Activated CD4-positive, alpha-beta memory T cell treated with anti-CD3 and anti-CD28 coated beads for 36 hours (primary cell): ENCODE measurements at regions of chr1 and their contacts with region 1.

Region 1: GRCh38 chr1:109984456-109985275 is at the start of gene AHCYL1:
- DNase-seq: peak; percentile 100
- H3K4me3 Mint-ChIP-seq: peak within 1 kb of the TSS; percentile 99
- H3K27ac Mint-ChIP-seq: peak within 1 kb of the TSS; percentile 92
- H3K4me1 Mint-ChIP-seq: peaks cover 39% of the 10 kb centered on the region
- H3K27me3 Mint-ChIP-seq: no peaks in the 10 kb centered on the region
- total RNA-seq, gene AHCYL1: 89.6 to 92.3 TPM

Region 2: DNA sequence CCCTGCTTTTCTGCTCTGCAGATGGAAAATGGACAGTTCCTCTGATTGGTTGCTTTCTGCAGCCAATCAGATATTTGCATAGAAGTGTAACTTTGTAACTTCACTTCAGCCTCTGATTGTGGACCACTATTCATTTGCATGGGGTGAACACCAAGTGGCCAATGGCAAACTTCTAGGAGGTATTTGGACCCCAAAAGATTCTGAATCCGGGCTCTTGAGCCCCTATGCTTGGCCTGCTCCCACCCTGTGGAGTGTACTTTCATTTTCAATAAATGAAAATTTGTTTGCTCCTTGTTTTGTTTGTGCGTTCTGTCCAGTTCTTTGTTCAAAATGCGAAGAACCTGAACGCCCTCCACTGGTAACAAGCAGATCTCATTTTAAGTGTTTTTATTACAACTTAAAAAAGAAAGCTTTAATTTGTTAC is 335.2 kb before region 1 on chr1:
- CTCF ChIA-PET with region 1: interaction called, 26 read pairs
- POLR2A ChIA-PET with region 1: no interaction called
- intact Hi-C with region 1: no loop called
- DNase-seq: no peak
- H3K4me3 Mint-ChIP-seq: no peak overlapping the region
- H3K27ac Mint-ChIP-seq: no peak overlapping the region
- H3K4me1 Mint-ChIP-seq: no peaks in the 10 kb centered on the region
- H3K27me3 Mint-ChIP-seq: peaks cover 9% of the 10 kb centered on the region

Region 3: GRCh38 chr1:109773146-109773899 is 211.3 kb before region 1 on chr1:
- CTCF ChIA-PET with region 1: interaction called, 723 read pairs
- POLR2A ChIA-PET with region 1: interaction called, 14 read pairs
- intact Hi-C with region 1: loop called (anchors 1 kb)
- DNase-seq: peak; percentile 83
- H3K4me3 Mint-ChIP-seq: no peak overlapping the region
- H3K27ac Mint-ChIP-seq: no peak overlapping the region
- H3K4me1 Mint-ChIP-seq: peaks cover 4% of the 10 kb centered on the region
- H3K27me3 Mint-ChIP-seq: no peaks in the 10 kb centered on the region

Region 4: GRCh38 chr1:109814993-109815786 is 169.5 kb before region 1 on chr1:
- CTCF ChIA-PET with region 1: interaction called, 10 read pairs
- POLR2A ChIA-PET with region 1: no interaction called
- intact Hi-C with region 1: no loop called
- DNase-seq: no peak
- H3K4me3 Mint-ChIP-seq: no peak overlapping the region
- H3K27ac Mint-ChIP-seq: no peak overlapping the region
- H3K4me1 Mint-ChIP-seq: peaks cover 6% of the 10 kb centered on the region
- H3K27me3 Mint-ChIP-seq: no peaks in the 10 kb centered on the region

Region 5: DNA sequence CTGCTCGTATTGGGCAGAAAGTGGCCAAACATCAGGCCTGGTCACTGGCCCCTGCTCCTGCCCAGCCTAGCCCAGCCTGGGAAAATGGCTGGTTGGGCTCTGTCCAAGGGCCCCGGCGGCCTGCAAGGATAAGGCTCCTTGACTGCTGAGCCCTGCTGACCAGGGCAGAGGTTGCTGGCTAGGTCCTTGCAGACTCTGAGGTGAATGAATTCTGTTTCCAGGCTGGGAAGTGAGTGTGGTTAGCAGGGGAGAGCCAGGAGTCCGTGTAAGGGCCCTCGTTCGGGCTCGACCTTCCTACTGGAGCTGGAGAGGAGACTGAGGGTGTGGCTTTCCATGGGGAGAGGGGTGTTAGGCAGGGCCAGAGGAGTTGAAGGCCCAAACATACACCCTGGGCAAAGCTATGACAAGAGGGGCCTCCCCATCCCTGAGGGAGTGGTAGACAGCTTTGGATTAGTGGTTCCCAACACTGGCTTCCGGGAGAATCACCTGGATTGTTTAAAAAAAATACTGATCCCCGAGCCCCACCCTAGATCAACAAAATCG is 53.4 kb before region 1 on chr1:
- CTCF ChIA-PET with region 1: interaction called, 10 read pairs
- POLR2A ChIA-PET with region 1: no interaction called
- intact Hi-C with region 1: no loop called
- DNase-seq: no peak
- H3K4me3 Mint-ChIP-seq: no peak overlapping the region
- H3K27ac Mint-ChIP-seq: no peak overlapping the region
- H3K4me1 Mint-ChIP-seq: peaks cover 5% of the 10 kb centered on the region
- H3K27me3 Mint-ChIP-seq: no peaks in the 10 kb centered on the region

Region 6: GRCh38 chr1:110034451-110035235 is 50.0 kb after region 1 on chr1 and contains the start of gene STRIP1:
- CTCF ChIA-PET with region 1: interaction called, 36 read pairs
- POLR2A ChIA-PET with region 1: interaction called, 4 read pairs
- intact Hi-C with region 1: loop called (anchors 1 kb)
- DNase-seq: peak; percentile 95
- H3K4me3 Mint-ChIP-seq: peak within 1 kb of the TSS; percentile 82
- H3K27ac Mint-ChIP-seq: peak within 1 kb of the TSS; percentile 92
- H3K4me1 Mint-ChIP-seq: peaks cover 59% of the 10 kb centered on the region
- H3K27me3 Mint-ChIP-seq: no peaks in the 10 kb centered on the region
- total RNA-seq, gene STRIP1: 22.7 to 25.7 TPM

Region 7: DNA sequence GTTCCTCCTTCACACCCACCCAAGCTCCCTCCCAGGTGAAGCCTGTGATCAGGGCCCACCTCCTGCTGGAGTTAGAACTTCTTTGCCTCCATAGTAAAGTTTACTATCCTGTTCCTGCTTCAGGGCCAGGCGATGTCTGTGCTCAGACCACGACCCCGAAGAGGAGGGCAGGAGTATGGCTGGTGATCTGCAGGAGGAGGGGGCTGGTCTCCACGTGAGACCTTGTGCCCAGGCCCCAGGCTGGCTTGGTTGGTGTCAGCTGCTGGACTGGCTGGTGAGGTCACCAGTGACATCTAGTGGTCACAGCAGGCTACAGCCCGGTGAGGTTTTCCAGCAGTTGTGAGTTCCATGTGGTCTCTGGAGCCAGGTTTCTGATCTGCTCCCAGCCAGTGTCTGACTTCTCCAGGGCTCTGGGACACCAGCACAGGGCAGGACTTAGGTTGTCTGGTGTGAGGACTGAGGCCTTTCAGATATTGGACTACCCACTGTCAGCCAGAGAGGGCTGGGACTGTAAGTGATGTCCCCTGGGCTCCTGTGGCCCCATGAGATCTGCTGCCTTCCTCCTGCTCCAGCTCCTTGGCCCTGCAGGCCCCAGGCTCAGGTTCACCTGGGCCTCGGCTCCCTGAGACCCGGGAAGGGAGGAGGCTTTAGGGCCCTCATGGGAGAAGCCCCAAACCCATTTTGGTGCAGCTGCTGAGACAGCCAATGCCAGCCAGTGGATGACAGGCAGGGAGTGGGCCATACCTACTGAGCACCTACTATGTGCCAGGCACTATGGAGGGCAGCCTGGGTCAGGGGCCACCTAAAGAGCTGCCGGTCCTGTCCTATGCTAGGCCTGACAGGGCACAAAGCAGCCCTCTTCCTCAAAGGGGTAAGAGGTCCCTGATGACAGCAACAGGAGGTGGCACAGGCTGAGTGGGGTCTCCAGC is 121.6 kb after region 1 on chr1:
- CTCF ChIA-PET with region 1: no interaction called
- POLR2A ChIA-PET with region 1: no interaction called
- intact Hi-C with region 1: no loop called
- DNase-seq: peak; percentile 77
- H3K4me3 Mint-ChIP-seq: no peak overlapping the region
- H3K27ac Mint-ChIP-seq: no peak overlapping the region
- H3K4me1 Mint-ChIP-seq: no peaks in the 10 kb centered on the region
- H3K27me3 Mint-ChIP-seq: no peaks in the 10 kb centered on the region